ENCODE measurements at regions of chr3 and their contacts with region 1.

Region 1: DNA sequence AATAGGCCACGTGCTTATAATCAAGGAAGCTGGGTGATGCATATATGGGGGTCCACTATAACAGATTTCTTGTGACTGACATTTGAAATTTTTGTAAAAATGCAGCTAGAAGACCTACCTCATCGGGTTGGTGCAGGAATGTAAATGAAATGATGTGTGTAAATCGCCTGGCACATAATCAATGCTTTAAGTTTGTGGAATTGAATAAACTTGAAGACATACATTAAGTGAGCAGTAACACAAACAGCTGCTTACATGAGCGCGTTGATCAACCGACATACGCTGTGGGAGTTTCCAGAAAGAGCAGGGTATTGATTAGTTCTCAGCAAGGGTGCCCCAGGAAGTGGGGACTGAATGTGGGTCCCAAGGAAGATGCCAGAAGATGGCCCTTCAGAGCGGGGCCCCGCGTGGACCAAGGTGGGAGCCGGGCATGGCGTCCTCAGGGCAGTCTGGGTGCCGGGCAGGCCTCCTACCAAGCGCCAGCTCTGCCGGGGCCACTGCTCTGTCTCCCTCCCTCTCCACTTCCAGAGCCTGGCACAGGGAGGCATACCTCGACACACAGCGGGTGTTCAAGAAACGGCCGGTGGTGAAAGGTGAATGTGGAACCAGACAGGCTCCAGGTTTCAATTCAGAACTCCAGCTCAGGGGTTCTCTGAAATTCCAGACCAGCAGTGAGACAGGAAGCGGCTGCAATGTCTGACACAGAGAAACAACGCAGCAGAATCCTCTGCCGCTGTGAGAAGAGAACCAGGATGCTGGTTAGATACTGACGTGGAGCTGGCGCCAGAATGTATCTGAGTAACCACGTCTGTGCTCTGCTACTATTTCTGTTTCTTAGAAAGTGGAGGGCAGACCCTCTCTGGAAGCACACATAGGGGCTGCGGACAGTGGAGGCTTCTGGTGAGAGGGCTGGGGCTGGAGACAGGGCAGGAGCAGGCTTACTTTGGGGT is 12.6 kb downstream of the BFSP2 start:
- DNase-seq: no peak
- CTCF ChIP-seq: no peak

Region 2: GRCh38 chr3:133237380-133237779 is 175.1 kb before region 1 on chr3:
- CTCF ChIA-PET with region 1: no interaction called
- POLR2A ChIA-PET with region 1: no interaction called
- DNase-seq: no peak
- CTCF ChIP-seq: no peak

Region 3: GRCh38 chr3:133400006-133400515 is 12.4 kb before region 1 on chr3 and contains the start of gene BFSP2:
- CTCF ChIA-PET with region 1: interaction called, 17 read pairs
- POLR2A ChIA-PET with region 1: no interaction called
- DNase-seq: no peak
- CTCF ChIP-seq: no peak

Region 4: GRCh38 chr3:133441867-133442270 is 29.4 kb after region 1 on chr3:
- CTCF ChIA-PET with region 1: no interaction called
- POLR2A ChIA-PET with region 1: no interaction called
- DNase-seq: no peak
- CTCF ChIP-seq: no peak

Measured in GM10248 (cell line).